HepG2 (cell line): ENCODE measurements at regions of chr21 and their contacts with region 1.

Region 1: DNA sequence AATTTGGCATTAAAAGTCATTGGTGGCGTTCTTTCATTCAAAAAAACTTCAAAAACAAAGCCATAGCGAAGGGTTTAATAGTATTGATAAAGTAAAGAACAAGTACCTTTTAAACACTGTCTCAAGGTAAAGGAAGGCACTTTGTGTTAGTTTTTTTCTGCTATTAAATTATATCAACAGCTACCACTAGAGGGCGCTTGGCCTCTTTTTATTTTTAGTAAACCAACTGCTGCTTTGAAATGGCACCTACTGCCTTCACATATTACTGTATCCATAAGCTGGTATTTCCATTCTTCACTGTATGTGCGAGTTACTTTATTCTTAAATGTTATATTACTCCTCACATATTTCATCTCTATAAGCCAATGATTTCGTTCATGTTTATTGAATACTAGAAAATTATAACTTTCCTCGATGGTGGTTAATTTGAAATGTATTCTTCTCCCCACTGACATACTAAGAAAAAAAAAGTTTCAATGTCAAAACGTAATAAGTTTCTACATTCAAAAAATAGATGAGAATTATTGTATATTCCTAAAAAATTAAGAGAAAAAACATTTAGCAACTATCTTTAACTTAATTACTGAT is 125.7 kb upstream of the CXADR start:
- DNase-seq: peak; percentile 75
- ATAC-seq: peak; percentile 74
- H3K4me3 ChIP-seq: no peak overlapping the region
- H3K27ac ChIP-seq: no peak overlapping the region
- H3K4me1 ChIP-seq: 0 out of 2 replicates have a peak, but pooled peaks cover 12% of the 10 kb centered on the region
- H3K27me3 ChIP-seq: no peaks in the 10 kb centered on the region
- CTCF ChIP-seq: peak; percentile 74
- EP300 ChIP-seq: no peak
- POLR2A ChIP-seq: no peak
- RAD21 ChIP-seq: peak; percentile 84

Region 2: DNA sequence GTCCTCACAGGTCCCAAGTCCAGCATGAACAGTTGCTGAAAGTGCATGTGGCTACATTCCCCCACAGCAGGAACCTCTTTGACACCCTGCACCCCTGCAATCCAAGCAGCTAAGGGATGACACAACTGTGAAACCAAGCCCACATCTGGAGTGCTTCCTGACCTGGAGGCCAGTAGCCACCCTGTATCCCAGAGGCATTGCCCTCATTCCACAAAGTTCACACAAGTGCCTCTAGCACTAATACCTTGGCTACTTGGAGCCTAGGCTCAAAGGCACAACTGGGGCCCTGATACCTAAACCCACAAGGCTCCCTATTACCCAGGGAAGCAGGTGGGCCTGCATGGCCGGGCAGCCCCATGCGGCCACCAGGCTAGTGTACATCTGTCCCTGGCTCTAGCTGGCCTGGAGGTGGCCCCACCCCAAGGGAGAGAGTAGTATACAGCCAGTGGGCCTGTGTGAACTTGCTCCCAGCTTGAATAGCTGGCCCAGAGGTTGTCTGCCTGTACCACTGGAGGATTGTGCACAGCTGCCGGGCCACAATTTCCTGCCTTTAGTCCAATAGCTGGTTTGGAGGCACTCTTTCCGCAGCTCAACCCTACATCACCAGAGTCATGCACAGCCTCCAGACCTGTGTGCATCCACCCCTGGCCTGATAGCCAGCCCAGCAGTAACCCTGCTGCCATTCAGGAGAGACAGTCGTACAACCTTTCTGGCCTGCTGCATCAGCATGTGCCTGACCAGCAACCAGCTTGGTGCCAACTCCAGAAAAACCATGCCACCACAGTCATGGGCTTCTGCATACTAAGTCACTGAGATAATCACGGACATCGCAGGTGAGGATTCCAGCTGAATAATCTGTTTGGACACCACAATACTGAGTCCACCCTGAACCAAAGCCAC is 1605.1 kb before region 1 on chr21:
- CTCF ChIA-PET with region 1: no interaction called
- POLR2A ChIA-PET with region 1: no interaction called
- in situ Hi-C with region 1: no loop called
- intact Hi-C with region 1: no loop called
- DNase-seq: no peak
- ATAC-seq: peak; percentile 51; the same call in 2 of the 3 replicates
- H3K4me3 ChIP-seq: no peak overlapping the region
- H3K27ac ChIP-seq: no peak overlapping the region
- H3K4me1 ChIP-seq: no peaks in the 10 kb centered on the region
- H3K27me3 ChIP-seq: no peaks in the 10 kb centered on the region
- CTCF ChIP-seq: no peak
- EP300 ChIP-seq: no peak
- POLR2A ChIP-seq: no peak
- RAD21 ChIP-seq: no peak

Region 3: GRCh38 chr21:17195976-17196375 is 191.1 kb before region 1 on chr21:
- CTCF ChIA-PET with region 1: no interaction called
- POLR2A ChIA-PET with region 1: no interaction called
- in situ Hi-C with region 1: no loop called
- intact Hi-C with region 1: no loop called
- DNase-seq: no peak
- ATAC-seq: no peak
- H3K4me3 ChIP-seq: no peak overlapping the region
- H3K27ac ChIP-seq: no peak overlapping the region
- H3K4me1 ChIP-seq: no peaks in the 10 kb centered on the region
- H3K27me3 ChIP-seq: no peaks in the 10 kb centered on the region
- CTCF ChIP-seq: no peak
- EP300 ChIP-seq: no peak
- POLR2A ChIP-seq: no peak
- RAD21 ChIP-seq: no peak

Region 4: GRCh38 chr21:17454315-17455027 is 67.3 kb after region 1 on chr21:
- CTCF ChIA-PET with region 1: no interaction called
- POLR2A ChIA-PET with region 1: no interaction called
- in situ Hi-C with region 1: no loop called
- intact Hi-C with region 1: loop called (anchors 1 kb)
- DNase-seq: peak; percentile 91
- ATAC-seq: peak; percentile 96
- H3K4me3 ChIP-seq: peak overlapping the region; percentile 54 to 78 (median 73)
- H3K27ac ChIP-seq: peak overlapping the region; percentile 83
- H3K4me1 ChIP-seq: peaks cover 42% of the 10 kb centered on the region
- H3K27me3 ChIP-seq: no peaks in the 10 kb centered on the region
- CTCF ChIP-seq: 0 out of 2 replicates have a peak, but pooled peaks have one; percentile 3
- EP300 ChIP-seq: peak in 1 of 2 experiments; percentile 25; a peak in 1 of 4 replicates
- POLR2A ChIP-seq: no peak
- RAD21 ChIP-seq: peak; percentile 35; the same call in 1 of the 2 replicates

Region 5: DNA sequence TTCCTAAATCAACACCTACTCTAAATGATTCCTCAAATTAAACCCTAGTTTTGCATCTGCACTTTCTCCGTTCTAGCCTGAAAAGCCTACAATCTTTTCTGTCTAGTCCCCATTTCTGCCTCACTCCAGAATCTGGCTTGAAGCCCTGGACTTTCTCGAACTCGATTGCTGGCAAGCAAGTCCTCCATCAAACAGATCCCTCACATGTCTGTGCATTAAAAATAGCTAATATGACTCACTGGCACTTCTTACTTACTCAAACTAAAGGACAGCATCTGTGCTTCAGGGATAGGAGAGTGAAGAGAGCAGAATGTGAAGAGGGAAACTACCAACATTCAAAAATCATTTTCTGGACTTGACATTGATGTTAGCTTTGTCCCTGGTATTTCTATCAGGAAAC is 73.9 kb after region 1 on chr21:
- CTCF ChIA-PET with region 1: no interaction called
- POLR2A ChIA-PET with region 1: no interaction called
- in situ Hi-C with region 1: no loop called
- intact Hi-C with region 1: loop called (anchors 2 kb)
- DNase-seq: no peak
- ATAC-seq: no peak
- H3K4me3 ChIP-seq: no peak overlapping the region
- H3K27ac ChIP-seq: peak overlapping the region; percentile 80
- H3K4me1 ChIP-seq: peaks cover 45% of the 10 kb centered on the region
- H3K27me3 ChIP-seq: no peaks in the 10 kb centered on the region
- CTCF ChIP-seq: no peak
- EP300 ChIP-seq: no peak
- POLR2A ChIP-seq: no peak
- RAD21 ChIP-seq: no peak

Region 6: GRCh38 chr21:17554679-17555465 is 167.7 kb after region 1 on chr21:
- CTCF ChIA-PET with region 1: interaction called, 17 read pairs
- POLR2A ChIA-PET with region 1: interaction called, 13 read pairs
- in situ Hi-C with region 1: loop called (anchors 10 kb)
- intact Hi-C with region 1: loop called (anchors 1 kb)
- DNase-seq: peak; percentile 32
- ATAC-seq: peak; percentile 62
- H3K4me3 ChIP-seq: no peak overlapping the region
- H3K27ac ChIP-seq: no peak overlapping the region
- H3K4me1 ChIP-seq: peaks cover 20% of the 10 kb centered on the region
- H3K27me3 ChIP-seq: no peaks in the 10 kb centered on the region
- CTCF ChIP-seq: peak; percentile 64
- EP300 ChIP-seq: no peak
- POLR2A ChIP-seq: no peak
- RAD21 ChIP-seq: peak; percentile 59

Region 7: DNA sequence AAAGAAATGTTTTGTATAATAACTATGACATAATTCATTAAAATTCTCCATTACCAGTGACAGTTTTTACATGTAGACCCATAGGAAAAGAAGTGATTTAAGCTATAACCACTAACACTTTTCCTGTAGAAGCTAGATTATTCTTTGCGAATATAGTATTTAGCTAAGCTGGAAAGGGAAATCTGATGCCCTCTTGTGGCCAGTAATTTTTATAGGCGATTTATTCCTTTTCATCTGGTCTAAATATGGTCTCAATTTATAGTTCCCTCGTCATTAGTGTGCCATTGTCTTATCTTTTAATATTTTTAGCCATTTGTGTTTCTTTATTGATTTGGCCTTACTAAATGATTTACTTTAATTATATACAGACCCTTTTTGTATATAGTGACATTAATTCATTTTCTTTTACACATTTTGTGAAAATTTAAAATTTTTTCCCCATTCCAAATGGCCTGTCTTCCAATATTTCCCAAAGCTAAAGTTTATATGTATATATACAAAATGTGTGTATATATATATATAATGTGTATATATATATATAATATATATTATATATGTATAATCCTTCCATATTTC is 198.8 kb after region 1 on chr21:
- CTCF ChIA-PET with region 1: interaction called, 24 read pairs
- POLR2A ChIA-PET with region 1: no interaction called
- in situ Hi-C with region 1: loop called (anchors 10 kb)
- intact Hi-C with region 1: loop called (anchors 1 kb)
- DNase-seq: peak; percentile 41
- ATAC-seq: peak; percentile 58; the same call in 2 of the 3 replicates
- H3K4me3 ChIP-seq: no peak overlapping the region
- H3K27ac ChIP-seq: no peak overlapping the region
- H3K4me1 ChIP-seq: no peaks in the 10 kb centered on the region
- H3K27me3 ChIP-seq: no peaks in the 10 kb centered on the region
- CTCF ChIP-seq: peak; percentile 43
- EP300 ChIP-seq: no peak
- POLR2A ChIP-seq: no peak
- RAD21 ChIP-seq: no peak